Common myeloid progenitor, CD34-positive (primary cell): ENCODE measurements at regions of chr14 and their contacts with region 1.

Region 1: DNA sequence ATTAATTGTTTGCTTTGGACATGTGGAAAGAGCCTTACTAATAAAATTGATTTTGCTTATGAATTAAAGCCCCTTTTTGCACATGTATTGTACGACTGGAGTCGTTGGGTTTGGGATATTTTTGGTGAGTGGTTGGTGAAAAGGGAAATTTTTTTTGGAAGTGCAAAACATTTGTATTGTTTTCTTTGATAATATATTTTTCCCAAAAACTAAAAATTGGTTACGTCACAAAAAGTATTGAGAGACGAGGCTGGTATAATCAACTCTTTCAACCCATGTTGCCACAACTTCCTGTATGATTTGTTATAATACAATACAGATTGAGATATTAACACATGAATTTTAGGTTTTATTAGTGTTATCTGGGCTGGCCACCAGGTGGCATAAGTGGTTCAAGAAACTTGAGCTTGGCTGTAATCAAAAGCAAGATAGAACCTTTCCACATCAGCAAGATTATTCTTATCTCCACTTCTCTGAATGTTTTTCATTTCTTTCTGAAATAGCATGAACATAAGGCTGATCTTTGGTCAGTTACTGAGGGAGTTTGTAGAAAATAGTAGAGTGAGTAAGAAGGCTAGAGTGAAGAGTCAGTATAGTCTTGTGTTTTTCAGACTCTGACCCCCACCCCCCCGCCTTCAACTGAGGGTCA is 8.7 kb downstream of the NGDN start:
- DNase-seq: peak; percentile 84 to 93 (median 89)
- H3K4me3 ChIP-seq: no peak overlapping the region
- H3K27ac ChIP-seq: no peak overlapping the region
- H3K4me1 ChIP-seq: no peaks in the 10 kb centered on the region
- H3K27me3 ChIP-seq: no peaks in the 10 kb centered on the region

Region 2: DNA sequence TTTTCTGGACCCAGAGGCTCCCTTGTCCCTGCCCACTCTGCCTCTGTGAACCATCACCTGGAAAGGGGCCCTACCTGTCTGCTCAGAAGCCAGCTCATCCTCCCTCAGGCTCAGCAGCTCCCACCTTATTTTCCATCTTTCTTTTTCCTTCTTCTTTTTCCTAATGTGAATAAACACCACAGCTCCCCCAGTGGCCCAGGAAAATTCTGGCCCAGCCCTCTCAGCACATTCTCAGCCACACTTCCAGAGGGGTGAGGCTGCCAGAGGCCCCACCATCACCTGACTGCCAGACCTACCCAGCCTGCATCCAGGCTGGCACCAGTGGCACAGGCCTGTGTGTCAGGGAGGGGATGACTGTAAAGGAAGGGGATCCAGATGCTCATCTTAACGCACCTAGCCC is 50.3 kb after region 1 on chr14:
- CTCF ChIA-PET with region 1: interaction called, 21 read pairs
- POLR2A ChIA-PET with region 1: no interaction called
- DNase-seq: no peak
- H3K4me3 ChIP-seq: no peak overlapping the region
- H3K27ac ChIP-seq: no peak overlapping the region
- H3K4me1 ChIP-seq: peaks cover 0 to 19% (median 14%) of the 10 kb centered on the region in 4 experiments
- H3K27me3 ChIP-seq: no peaks in the 10 kb centered on the region

Region 3: GRCh38 chr14:23539248-23540140 is 61.3 kb after region 1 on chr14:
- CTCF ChIA-PET with region 1: interaction called, 134 read pairs
- POLR2A ChIA-PET with region 1: no interaction called
- DNase-seq: peak; percentile 36 to 51 (median 39)
- H3K4me3 ChIP-seq: no peak overlapping the region
- H3K27ac ChIP-seq: no peak overlapping the region
- H3K4me1 ChIP-seq: peaks cover 0 to 4% (median 0%) of the 10 kb centered on the region in 4 experiments
- H3K27me3 ChIP-seq: no peaks in the 10 kb centered on the region

Region 4: GRCh38 chr14:23548351-23549318 is 70.4 kb after region 1 on chr14:
- CTCF ChIA-PET with region 1: interaction called, 519 read pairs
- POLR2A ChIA-PET with region 1: no interaction called
- DNase-seq: peak in 1 of 3 donors; percentile 17
- H3K4me3 ChIP-seq: no peak overlapping the region
- H3K27ac ChIP-seq: no peak overlapping the region
- H3K4me1 ChIP-seq: peaks cover 0 to 17% (median 11%) of the 10 kb centered on the region in 4 experiments
- H3K27me3 ChIP-seq: peaks cover 0 to 18% (median 10%) of the 10 kb centered on the region in 5 experiments